ENCODE measurements at regions of chr13 and their contacts with region 1.

Region 1: DNA sequence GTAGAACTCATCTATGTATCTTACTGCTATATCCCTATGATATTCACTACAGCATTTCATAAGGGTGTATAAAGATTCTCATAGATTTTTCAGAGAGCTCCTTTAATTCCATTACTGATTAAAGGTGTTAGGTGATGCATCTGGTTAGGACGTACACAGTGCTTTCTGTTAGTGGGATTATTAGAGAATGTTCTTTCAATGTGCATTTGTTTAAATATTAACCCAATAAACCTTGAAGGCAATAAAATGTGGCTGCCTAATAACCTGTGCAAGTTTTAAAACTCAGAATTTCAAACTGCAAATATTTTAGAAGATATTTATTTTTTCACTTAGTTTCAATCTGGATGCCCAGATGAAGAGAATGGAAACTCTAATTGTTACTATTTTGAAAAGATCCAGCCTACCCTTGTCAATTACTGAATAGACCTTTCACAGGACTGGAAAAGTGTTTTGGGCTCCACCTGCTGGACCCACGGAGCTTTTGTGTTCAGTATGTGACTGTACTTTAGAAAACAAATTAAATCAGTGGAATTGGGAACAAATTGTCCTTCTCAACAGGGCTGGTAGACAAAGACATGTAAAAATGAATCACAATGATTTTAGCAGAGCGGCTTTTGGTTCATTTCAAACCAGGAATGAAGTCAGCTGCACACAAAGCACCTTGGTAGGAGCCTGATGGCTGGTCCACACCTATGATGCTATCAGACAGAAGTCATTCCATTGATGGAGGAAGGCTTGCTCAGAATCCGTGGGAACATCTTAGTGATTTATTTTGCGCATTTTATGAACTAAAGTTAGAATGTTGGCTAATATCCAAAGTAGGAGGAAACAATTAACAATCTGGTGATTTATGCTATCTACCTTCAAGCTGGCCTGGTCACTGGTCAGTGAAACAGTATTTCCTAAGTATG is 89.4 kb upstream of the RAP2A start:
- DNase-seq: no peak
- ATAC-seq: peak; percentile 93
- H3K4me3 ChIP-seq: no peak overlapping the region
- H3K27ac ChIP-seq: no peak overlapping the region
- H3K4me1 ChIP-seq: no peaks in the 10 kb centered on the region
- H3K27me3 ChIP-seq: no peaks in the 10 kb centered on the region
- CTCF ChIP-seq: peak; percentile 59 to 68 (median 64); a peak in 5 of 6 replicates
- EP300 ChIP-seq: no peak
- POLR2A ChIP-seq: no peak
- RAD21 ChIP-seq: peak; percentile 85

Region 2: DNA sequence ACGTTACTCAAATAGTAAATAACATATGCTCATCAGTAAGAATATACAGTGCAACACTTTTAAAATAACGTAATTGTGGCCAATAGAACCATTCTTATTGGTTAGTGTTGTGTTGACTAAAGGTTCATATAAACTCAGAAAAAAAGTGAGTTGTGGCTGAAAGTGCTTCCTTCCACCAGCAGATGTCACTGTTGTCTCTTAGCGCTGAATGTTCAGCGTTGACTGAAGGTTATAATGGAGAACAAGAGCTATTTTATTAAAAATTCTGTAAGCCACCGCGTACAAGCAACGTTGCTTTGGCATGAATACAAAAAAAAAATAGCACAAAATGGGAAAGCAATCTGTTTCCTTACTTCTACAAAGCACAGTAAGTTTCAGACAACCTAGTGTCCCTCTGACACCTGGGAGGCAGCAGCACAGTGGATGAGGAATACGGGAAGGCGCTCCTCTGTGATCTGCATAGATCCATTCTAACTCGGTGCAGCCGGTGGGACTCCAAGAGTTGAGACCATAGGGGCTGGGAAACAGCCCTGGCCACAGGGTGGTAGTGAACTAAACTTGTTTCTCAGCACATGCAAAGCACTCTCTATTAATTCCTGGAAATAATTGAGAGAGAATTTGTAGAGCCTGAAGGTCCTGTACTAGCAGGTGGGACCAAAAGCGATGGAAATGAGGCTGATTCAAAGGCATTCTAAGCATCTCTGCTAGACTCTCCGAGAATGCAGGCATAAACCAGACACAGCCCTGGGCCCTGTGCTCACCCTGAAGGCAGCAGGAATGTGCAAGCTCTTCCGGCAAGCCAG is 326.3 kb before region 1 on chr13:
- CTCF ChIA-PET with region 1: interaction called, 3 read pairs
- POLR2A ChIA-PET with region 1: no interaction called
- RAD21 ChIA-PET with region 1: interaction called, 3 read pairs
- SMC1A ChIA-PET with region 1: interaction called, 5 read pairs
- in situ Hi-C with region 1: no loop called
- intact Hi-C with region 1: loop called (anchors 5 kb)
- DNase-seq: no peak
- ATAC-seq: peak; percentile 87
- H3K4me3 ChIP-seq: no peak overlapping the region
- H3K27ac ChIP-seq: no peak overlapping the region
- H3K4me1 ChIP-seq: no peaks in the 10 kb centered on the region
- H3K27me3 ChIP-seq: peaks cover 0 to 6% of the 10 kb centered on the region in 2 experiments; a peak in 2 of 4 replicates
- CTCF ChIP-seq: peak; percentile 78 to 88 (median 80)
- EP300 ChIP-seq: no peak
- POLR2A ChIP-seq: no peak
- RAD21 ChIP-seq: peak; percentile 66

Region 3: GRCh38 chr13:97030705-97031452 is 313.6 kb before region 1 on chr13:
- CTCF ChIA-PET with region 1: no interaction called
- POLR2A ChIA-PET with region 1: no interaction called
- RAD21 ChIA-PET with region 1: no interaction called
- SMC1A ChIA-PET with region 1: no interaction called
- in situ Hi-C with region 1: no loop called
- intact Hi-C with region 1: loop called (anchors 5 kb)
- DNase-seq: no peak
- ATAC-seq: peak; percentile 45; the same call in 2 of the 3 replicates
- H3K4me3 ChIP-seq: no peak overlapping the region
- H3K27ac ChIP-seq: no peak overlapping the region
- H3K4me1 ChIP-seq: no peaks in the 10 kb centered on the region
- H3K27me3 ChIP-seq: no peaks in the 10 kb centered on the region; a peak in 1 of 4 replicates
- CTCF ChIP-seq: peak in 2 of 3 experiments; percentile 5 to 27; a peak in 1 of 6 replicates
- EP300 ChIP-seq: no peak
- POLR2A ChIP-seq: no peak
- RAD21 ChIP-seq: 0 out of 2 replicates have a peak, but pooled peaks have one; percentile 19

Region 4: GRCh38 chr13:97212601-97213040 is 131.9 kb before region 1 on chr13:
- CTCF ChIA-PET with region 1: interaction called, 10 read pairs
- POLR2A ChIA-PET with region 1: no interaction called
- RAD21 ChIA-PET with region 1: interaction called, 3 read pairs
- SMC1A ChIA-PET with region 1: interaction called, 3 read pairs
- in situ Hi-C with region 1: no loop called
- intact Hi-C with region 1: loop called (anchors 2 kb)
- DNase-seq: no peak
- ATAC-seq: peak; percentile 84
- H3K4me3 ChIP-seq: no peak overlapping the region
- H3K27ac ChIP-seq: no peak overlapping the region
- H3K4me1 ChIP-seq: peaks cover 7% of the 10 kb centered on the region
- H3K27me3 ChIP-seq: no peaks in the 10 kb centered on the region
- CTCF ChIP-seq: peak; percentile 43 to 60 (median 53)
- EP300 ChIP-seq: no peak
- POLR2A ChIP-seq: no peak
- RAD21 ChIP-seq: peak; percentile 59

Region 5: GRCh38 chr13:97359181-97360057 is 14.9 kb after region 1 on chr13:
- CTCF ChIA-PET with region 1: interaction called, 12 read pairs
- POLR2A ChIA-PET with region 1: no interaction called
- RAD21 ChIA-PET with region 1: no interaction called
- SMC1A ChIA-PET with region 1: interaction called, 11 read pairs
- in situ Hi-C with region 1: no loop called
- intact Hi-C with region 1: no loop called
- DNase-seq: no peak
- ATAC-seq: peak; percentile 100
- H3K4me3 ChIP-seq: no peak overlapping the region
- H3K27ac ChIP-seq: no peak overlapping the region
- H3K4me1 ChIP-seq: no peaks in the 10 kb centered on the region
- H3K27me3 ChIP-seq: no peaks in the 10 kb centered on the region
- CTCF ChIP-seq: peak; percentile 77 to 84 (median 83)
- EP300 ChIP-seq: no peak
- POLR2A ChIP-seq: no peak
- RAD21 ChIP-seq: peak; percentile 90